ENCODE measurements at regions of chr3 and their contacts with region 1.

Region 1: GRCh38 chr3:48039487-48040190 is 23.4 kb upstream of the MAP4 start:
- DNase-seq: no peak

Region 2: DNA sequence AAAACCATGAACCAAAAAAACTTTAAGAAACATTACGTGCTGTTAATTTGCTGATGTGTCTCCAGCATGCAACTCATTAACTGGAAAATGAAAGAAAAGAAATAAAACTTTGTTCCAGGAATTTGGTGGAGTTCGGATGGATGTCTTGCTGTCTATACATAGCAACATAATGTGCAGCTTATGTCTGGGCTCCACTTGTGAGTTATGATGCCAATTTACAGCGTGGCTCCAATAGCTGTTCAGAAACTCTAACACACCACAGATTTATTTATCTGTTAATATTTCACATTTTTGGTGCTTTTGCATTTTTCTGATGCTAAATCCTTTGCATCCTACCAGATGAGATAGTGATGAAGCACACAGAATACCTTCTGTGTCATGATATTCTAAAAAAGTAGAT is 68.6 kb before region 1 on chr3:
- intact Hi-C with region 1: no loop called
- DNase-seq: no peak

Region 3: GRCh38 chr3:48088749-48089466 is 49.3 kb after region 1 on chr3:
- intact Hi-C with region 1: loop called in 1 of 2 experiments (anchors 10 kb)
- DNase-seq: peak; percentile 99

Region 4: DNA sequence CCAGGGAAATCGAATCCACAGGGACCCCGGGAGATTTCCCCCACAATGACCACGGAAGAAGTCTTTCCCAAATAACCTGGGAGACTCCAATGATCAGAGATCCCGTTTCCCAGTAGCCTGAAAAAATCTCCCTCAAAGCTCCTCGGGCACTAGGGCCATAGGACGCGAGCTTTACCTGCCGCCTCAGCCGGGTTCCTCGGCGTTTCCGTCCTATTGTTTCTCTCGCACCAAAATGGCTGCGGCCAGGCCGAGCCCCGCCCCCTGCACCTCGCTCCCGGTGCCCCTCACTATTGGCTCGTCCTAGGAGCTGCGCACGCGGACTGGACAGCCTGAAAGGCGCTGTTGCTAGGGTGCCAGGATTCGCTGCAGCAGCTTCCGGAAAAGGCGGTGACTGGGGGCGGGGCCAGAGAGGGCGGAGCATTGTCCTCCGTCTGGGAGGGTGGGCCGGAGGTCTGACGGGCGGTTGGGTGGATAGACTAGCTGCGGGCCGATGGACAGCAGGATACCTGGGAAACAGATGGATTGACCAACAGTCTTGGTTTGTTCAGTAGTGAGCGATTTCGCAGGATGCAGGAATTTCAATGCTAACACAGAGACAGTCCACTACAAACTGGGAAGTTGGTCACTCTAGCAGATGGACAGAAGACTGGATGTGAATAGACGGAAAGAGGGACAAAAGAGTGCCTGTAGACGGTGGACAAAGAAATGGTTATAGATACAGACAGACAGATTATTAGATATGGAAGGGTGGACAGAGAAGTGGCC is 677.5 kb after region 1 on chr3 and contains the start of gene IP6K2:
- intact Hi-C with region 1: no loop called
- DNase-seq: peak; percentile 100
- total RNA-seq, gene IP6K2: 24.6 to 33.1 TPM